Activated B cell treated with CpG ODN at 0.5 μM for 24 hours (primary cell): ENCODE measurements at regions of chr17 and their contacts with region 1.

Region 1: DNA sequence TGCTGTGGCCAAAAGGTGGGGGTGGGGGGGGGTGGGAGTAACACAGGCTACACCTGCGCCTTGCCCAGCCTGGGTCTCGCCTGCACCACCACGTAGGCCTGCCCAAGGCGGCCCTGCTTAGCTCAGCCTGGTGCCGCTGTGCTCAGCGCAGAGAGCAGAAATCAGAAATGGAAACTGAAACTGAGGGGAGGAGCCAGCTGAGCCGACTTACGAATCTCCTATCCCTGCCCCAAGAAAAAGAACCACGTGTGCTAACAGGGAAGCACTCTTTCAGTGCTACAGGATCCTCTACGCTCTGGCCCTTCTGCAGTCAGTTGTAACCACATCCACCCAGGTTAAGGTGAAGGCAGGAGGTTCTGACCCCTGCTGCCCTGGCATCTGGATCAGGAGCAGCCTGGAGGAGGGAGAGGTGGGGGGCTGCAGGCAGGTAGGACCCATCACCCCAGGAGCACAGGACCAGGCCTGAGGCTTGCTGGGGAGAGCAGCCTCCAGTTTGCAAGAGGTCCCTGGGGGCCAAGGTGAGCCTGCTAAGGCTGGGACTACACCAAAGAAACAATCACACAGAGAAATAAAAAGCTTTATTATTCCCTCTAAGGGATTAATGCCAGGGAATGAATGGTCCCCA is at the start of gene DHX58:
- DNase-seq: peak; percentile 55
- ATAC-seq: peak; percentile 76
- H3K4me3 Mint-ChIP-seq: peak within 1 kb of the TSS; percentile 80
- H3K27ac Mint-ChIP-seq: peak within 1 kb of the TSS; percentile 91
- H3K4me1 Mint-ChIP-seq: peaks cover 57% of the 10 kb centered on the region
- H3K27me3 Mint-ChIP-seq: no peaks in the 10 kb centered on the region
- CTCF ChIP-seq: no peak
- total RNA-seq, gene DHX58: 21.9 and 22.4 TPM in 2 replicates

Region 2: GRCh38 chr17:41801374-41802271 is 311.0 kb before region 1 on chr17:
- CTCF ChIA-PET with region 1: no interaction called
- POLR2A ChIA-PET with region 1: no interaction called
- intact Hi-C with region 1: loop called (anchors 1 kb)
- DNase-seq: peak; percentile 68
- ATAC-seq: peak; percentile 87
- H3K4me3 Mint-ChIP-seq: no peak overlapping the region
- H3K27ac Mint-ChIP-seq: no peak overlapping the region
- H3K4me1 Mint-ChIP-seq: peaks cover 17% of the 10 kb centered on the region
- H3K27me3 Mint-ChIP-seq: no peaks in the 10 kb centered on the region
- CTCF ChIP-seq: peak; percentile 77

Region 3: GRCh38 chr17:42027961-42028790 is 84.5 kb before region 1 on chr17:
- CTCF ChIA-PET with region 1: interaction called, 12 read pairs
- POLR2A ChIA-PET with region 1: interaction called, 12 read pairs
- intact Hi-C with region 1: loop called (anchors 1 kb)
- DNase-seq: no peak
- ATAC-seq: no peak
- H3K4me3 Mint-ChIP-seq: no peak overlapping the region
- H3K27ac Mint-ChIP-seq: no peak overlapping the region
- H3K4me1 Mint-ChIP-seq: peaks cover 18% of the 10 kb centered on the region
- H3K27me3 Mint-ChIP-seq: no peaks in the 10 kb centered on the region
- CTCF ChIP-seq: no peak

Region 4: GRCh38 chr17:42096360-42097111 is 16.1 kb before region 1 on chr17:
- CTCF ChIA-PET with region 1: interaction called, 8 read pairs
- POLR2A ChIA-PET with region 1: interaction called, 33 read pairs
- intact Hi-C with region 1: loop called (anchors 1 kb)
- DNase-seq: no peak
- ATAC-seq: no peak
- H3K4me3 Mint-ChIP-seq: no peak overlapping the region
- H3K27ac Mint-ChIP-seq: no peak overlapping the region
- H3K4me1 Mint-ChIP-seq: peaks cover 12% of the 10 kb centered on the region
- H3K27me3 Mint-ChIP-seq: peaks cover 9% of the 10 kb centered on the region
- CTCF ChIP-seq: no peak

Region 5: DNA sequence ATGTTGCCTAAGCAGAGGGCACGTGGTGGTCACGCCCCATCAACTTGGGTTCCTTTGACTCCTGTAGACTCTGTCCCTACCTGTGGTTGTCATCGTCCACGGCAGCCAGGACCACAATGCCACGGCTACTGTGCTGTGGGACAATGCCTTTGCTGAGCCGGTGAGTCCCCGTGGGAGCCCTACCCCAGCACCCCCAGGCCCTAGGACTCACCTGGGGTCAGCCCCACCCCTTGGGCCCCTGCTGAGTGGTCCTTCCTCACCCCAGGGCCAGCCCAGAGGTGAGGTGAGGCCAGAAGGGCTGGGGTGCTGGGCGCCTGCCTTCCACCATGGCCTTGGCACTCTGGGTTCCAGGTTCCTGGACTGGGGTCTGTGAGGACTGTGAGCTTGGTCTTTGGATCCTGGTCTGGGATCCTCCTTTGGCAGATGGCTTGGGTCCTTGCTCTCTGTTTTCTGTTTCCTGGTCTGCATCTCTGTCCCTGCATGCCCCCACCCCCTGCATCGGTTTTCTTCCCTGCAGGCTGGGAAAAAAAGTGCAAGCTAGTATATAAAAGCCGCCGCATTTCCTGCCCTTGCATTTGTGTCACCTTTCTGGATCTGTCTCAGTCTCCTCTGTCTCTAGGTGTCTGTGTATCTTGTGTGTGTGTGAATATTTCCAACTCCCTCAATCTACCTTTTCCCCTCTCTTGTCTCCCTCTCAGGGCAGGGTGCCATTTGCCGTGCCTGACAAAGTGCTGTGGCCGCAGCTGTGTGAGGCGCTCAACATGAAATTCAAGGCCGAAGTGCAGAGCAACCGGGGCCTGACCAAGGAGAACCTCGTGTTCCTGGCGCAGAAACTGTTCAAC is 193.1 kb after region 1 on chr17:
- CTCF ChIA-PET with region 1: no interaction called
- POLR2A ChIA-PET with region 1: no interaction called
- intact Hi-C with region 1: no loop called
- DNase-seq: no peak
- ATAC-seq: no peak
- H3K4me3 Mint-ChIP-seq: no peak overlapping the region
- H3K27ac Mint-ChIP-seq: no peak overlapping the region
- H3K4me1 Mint-ChIP-seq: peaks cover 3% of the 10 kb centered on the region
- H3K27me3 Mint-ChIP-seq: no peaks in the 10 kb centered on the region
- CTCF ChIP-seq: no peak